A673 (cell line): ENCODE measurements at regions of chr2 and their contacts with region 1.

Region 1: DNA sequence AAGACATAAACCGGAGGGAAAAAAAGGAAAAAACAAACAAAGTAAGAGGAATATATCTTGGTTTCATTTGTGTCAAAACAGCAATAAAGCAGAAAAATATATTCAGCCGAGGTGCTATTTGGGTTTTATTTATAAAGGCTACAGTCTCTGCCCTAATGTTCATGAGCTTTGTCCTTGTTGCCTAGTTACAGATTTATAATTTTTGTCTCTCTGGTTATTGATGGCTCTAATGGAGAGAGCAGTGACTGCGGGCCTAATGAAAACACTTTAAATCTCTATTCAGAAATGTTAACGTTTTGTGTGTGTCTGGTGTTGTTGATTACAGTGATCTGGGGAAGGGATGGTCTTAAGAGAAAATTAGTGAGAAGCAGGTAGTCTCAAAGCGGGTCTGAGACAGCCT is 854.0 kb upstream of the LRRTM1 start:
- DNase-seq: no peak
- H3K4me3 ChIP-seq: no peak overlapping the region
- H3K27ac ChIP-seq: no peak overlapping the region
- H3K4me1 ChIP-seq: no peaks in the 10 kb centered on the region
- H3K27me3 ChIP-seq: no peaks in the 10 kb centered on the region
- CTCF ChIP-seq: no peak

Region 2: GRCh38 chr2:80147690-80148089 is 1010.8 kb before region 1 on chr2:
- CTCF ChIA-PET with region 1: interaction called, 15 read pairs
- POLR2A ChIA-PET with region 1: no interaction called
- intact Hi-C with region 1: no loop called
- DNase-seq: no peak
- H3K4me3 ChIP-seq: no peak overlapping the region
- H3K27ac ChIP-seq: no peak overlapping the region
- H3K4me1 ChIP-seq: no peaks in the 10 kb centered on the region
- H3K27me3 ChIP-seq: no peaks in the 10 kb centered on the region
- CTCF ChIP-seq: no peak

Region 3: DNA sequence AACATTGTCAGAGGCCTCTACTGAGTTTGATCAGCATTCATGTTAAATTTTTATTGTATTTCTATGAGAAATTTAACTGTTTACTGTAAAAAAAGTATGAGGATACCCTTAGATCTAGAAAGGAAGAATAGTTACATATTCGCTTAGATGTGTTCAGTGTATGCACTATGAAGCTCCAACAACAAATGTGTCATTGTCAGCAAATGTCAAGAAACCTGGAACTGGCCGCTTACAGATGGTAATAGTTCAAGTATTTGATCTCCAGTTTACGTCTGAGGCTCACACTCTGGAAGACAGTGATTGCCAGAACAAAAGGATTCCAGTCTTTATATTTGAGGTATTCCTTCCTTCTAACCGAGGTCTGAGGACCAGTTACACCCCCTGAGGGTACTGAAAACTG is 67.3 kb after region 1 on chr2:
- CTCF ChIA-PET with region 1: no interaction called
- POLR2A ChIA-PET with region 1: no interaction called
- intact Hi-C with region 1: no loop called
- DNase-seq: no peak
- H3K4me3 ChIP-seq: no peak overlapping the region
- H3K27ac ChIP-seq: no peak overlapping the region
- H3K4me1 ChIP-seq: no peaks in the 10 kb centered on the region
- H3K27me3 ChIP-seq: no peaks in the 10 kb centered on the region
- CTCF ChIP-seq: no peak

Region 4: GRCh38 chr2:81436256-81436655 is 277.8 kb after region 1 on chr2:
- CTCF ChIA-PET with region 1: no interaction called
- POLR2A ChIA-PET with region 1: no interaction called
- intact Hi-C with region 1: no loop called
- DNase-seq: no peak
- H3K4me3 ChIP-seq: no peak overlapping the region
- H3K27ac ChIP-seq: no peak overlapping the region
- H3K4me1 ChIP-seq: no peaks in the 10 kb centered on the region
- H3K27me3 ChIP-seq: no peaks in the 10 kb centered on the region
- CTCF ChIP-seq: no peak